Activated CD8-positive, alpha-beta T cell treated with anti-CD3 and anti-CD28 coated beads, Interleukin-2, amount 10 ng/mL, durations not matched to agents 7 days and 5 days (primary cell): ENCODE measurements at regions of chr7 and their contacts with region 1.

Region 1: DNA sequence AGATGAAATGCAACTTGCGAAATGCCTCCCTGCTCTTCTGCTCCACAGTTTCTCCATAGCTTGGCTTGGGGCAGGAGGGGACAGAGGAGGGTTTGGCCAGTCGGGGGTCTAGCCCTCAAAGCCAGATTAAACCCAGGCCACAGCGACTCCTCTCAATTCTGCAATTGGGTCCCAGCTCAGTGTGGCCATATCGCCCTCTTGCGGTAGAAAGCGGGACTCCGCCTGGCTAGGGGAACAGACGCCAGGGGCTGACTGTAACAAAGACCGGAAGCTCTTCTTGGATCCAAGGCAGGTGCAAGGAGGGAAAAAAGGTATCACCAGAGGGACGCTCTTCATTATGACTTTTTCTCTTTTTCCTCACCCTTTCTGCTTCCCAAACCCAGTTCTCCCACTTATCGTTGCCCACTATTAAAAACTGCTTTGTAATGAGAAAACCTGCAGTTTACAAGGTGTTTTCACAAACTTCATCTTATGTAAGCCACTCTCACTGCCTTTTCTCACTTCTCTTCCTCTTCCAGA is 36.6 kb upstream of the TNPO3 start:
- DNase-seq: peak; percentile 91
- ATAC-seq: peak; percentile 87
- H3K4me3 Mint-ChIP-seq: no peak overlapping the region
- H3K27ac Mint-ChIP-seq: no peak overlapping the region
- H3K4me1 Mint-ChIP-seq: peaks cover 39% of the 10 kb centered on the region
- H3K27me3 Mint-ChIP-seq: peaks cover 2% of the 10 kb centered on the region

Region 2: DNA sequence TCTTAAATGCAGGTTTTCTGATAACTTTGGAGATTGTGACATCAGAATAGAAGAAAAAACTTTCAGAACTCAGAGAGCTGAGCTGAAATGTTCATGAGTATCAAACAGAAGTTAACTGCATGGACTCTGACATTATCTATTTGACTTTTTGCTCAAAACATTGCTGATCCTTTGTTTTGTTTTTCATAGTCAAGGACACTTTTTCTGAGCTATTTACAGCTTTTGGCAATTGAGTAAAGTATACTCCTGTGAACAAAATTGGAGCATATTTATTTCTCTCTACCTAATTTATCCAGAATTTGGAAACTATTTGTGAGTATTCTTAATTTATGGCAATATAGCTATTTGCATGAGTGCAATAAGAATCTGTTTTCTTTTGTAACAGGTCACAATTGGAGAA is 192.2 kb before region 1 on chr7:
- CTCF ChIA-PET with region 1: interaction called, 23 read pairs
- POLR2A ChIA-PET with region 1: no interaction called
- DNase-seq: no peak
- ATAC-seq: no peak
- H3K4me3 Mint-ChIP-seq: no peak overlapping the region
- H3K27ac Mint-ChIP-seq: no peak overlapping the region
- H3K4me1 Mint-ChIP-seq: no peaks in the 10 kb centered on the region
- H3K27me3 Mint-ChIP-seq: peaks cover 2% of the 10 kb centered on the region

Region 3: DNA sequence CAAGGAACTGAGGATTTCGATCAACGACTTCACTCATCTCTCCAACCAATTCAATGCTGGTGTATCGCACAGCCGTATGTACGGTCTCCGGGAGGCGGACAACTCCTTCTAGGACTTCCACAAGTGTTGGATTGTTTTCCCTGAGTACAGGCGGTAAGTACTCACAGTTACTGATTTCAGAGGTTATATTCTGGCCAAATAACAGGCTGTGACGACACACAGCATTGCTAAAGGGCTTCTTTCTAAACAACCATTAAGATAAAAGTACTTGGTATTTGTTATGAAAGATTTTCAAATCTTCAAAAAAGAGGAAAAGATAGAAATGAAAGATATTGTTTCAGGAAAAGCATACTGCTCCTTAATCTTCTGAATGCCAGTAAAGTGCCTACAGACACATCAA is 101.6 kb before region 1 on chr7:
- CTCF ChIA-PET with region 1: interaction called, 11 read pairs
- POLR2A ChIA-PET with region 1: no interaction called
- DNase-seq: no peak
- ATAC-seq: no peak
- H3K4me3 Mint-ChIP-seq: no peak overlapping the region
- H3K27ac Mint-ChIP-seq: no peak overlapping the region
- H3K4me1 Mint-ChIP-seq: no peaks in the 10 kb centered on the region
- H3K27me3 Mint-ChIP-seq: no peaks in the 10 kb centered on the region

Region 4: GRCh38 chr7:129066290-129067131 is 25.0 kb before region 1 on chr7:
- CTCF ChIA-PET with region 1: interaction called, 16 read pairs
- POLR2A ChIA-PET with region 1: no interaction called
- DNase-seq: no peak
- ATAC-seq: no peak
- H3K4me3 Mint-ChIP-seq: no peak overlapping the region
- H3K27ac Mint-ChIP-seq: no peak overlapping the region
- H3K4me1 Mint-ChIP-seq: peaks cover 14% of the 10 kb centered on the region
- H3K27me3 Mint-ChIP-seq: peaks cover 10% of the 10 kb centered on the region

Region 5: DNA sequence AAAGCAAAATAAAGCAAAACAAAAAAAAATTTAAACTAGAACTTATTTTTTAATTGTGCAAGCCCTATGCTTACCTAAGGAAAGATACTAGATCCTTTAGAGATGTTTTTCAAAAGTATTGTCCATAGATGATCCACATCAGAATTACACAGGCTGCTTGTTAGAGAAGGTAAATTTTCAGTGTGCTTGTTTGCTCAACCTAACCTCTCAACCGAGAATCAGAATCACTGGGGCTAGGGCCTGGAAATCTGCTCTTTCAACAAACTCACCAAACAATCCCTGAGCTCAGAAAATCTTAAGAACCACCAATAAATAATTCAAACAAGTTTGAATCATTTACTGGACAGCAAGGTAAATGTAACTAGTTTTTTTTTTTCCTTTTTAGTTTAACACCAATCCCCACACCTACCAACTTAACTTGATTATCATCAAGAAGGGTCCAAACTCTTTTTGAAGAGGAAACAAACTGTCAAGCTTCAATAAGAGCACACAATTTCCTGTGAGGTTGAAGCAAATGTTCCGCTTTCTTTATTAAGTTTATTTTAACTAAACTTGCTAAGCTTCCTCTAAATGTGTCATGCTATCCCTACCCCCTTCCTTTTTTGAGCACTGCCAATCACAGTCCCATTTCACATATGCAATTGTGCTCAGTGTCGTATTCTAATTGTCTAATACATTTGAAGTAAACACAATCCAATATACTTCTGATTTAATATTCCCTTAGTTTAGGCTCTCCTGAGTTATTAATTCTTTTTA is 45.5 kb after region 1 on chr7:
- CTCF ChIA-PET with region 1: interaction called, 14 read pairs
- POLR2A ChIA-PET with region 1: no interaction called
- DNase-seq: no peak
- ATAC-seq: peak; percentile 70
- H3K4me3 Mint-ChIP-seq: peak overlapping the region; percentile 32
- H3K27ac Mint-ChIP-seq: peak overlapping the region; percentile 85
- H3K4me1 Mint-ChIP-seq: peaks cover 24% of the 10 kb centered on the region
- H3K27me3 Mint-ChIP-seq: peaks cover 2% of the 10 kb centered on the region

Region 6: GRCh38 chr7:129163875-129164544 is 72.5 kb after region 1 on chr7:
- CTCF ChIA-PET with region 1: interaction called, 20 read pairs
- POLR2A ChIA-PET with region 1: no interaction called
- DNase-seq: peak; percentile 52
- ATAC-seq: no peak
- H3K4me3 Mint-ChIP-seq: no peak overlapping the region
- H3K27ac Mint-ChIP-seq: no peak overlapping the region
- H3K4me1 Mint-ChIP-seq: peaks cover 11% of the 10 kb centered on the region
- H3K27me3 Mint-ChIP-seq: no peaks in the 10 kb centered on the region